Heart left ventricle (tissue), 16 donors: ENCODE measurements at regions of chr22 and their contacts with region 1.

Region 1: GRCh38 chr22:22959147-22959827 is 71.7 kb downstream of the IGLL5 start:
- DNase-seq: peak; percentile 64 to 73 (median 70)
- ATAC-seq: peak; percentile 35 to 74 (median 71)
- H3K4me3 ChIP-seq: no peak overlapping the region
- H3K27ac ChIP-seq: peak overlapping the region in 9 of 12 donors; percentile 43 to 79 (median 66)
- H3K4me1 ChIP-seq: peaks cover 0 to 14% (median 6%) of the 10 kb centered on the region in 12 donors
- H3K27me3 ChIP-seq: peaks cover 0 to 17% (median 0%) of the 10 kb centered on the region in 9 donors
- CTCF ChIP-seq: peak; percentile 80 to 99 (median 92)
- POLR2A ChIP-seq: no peak

Region 2: DNA sequence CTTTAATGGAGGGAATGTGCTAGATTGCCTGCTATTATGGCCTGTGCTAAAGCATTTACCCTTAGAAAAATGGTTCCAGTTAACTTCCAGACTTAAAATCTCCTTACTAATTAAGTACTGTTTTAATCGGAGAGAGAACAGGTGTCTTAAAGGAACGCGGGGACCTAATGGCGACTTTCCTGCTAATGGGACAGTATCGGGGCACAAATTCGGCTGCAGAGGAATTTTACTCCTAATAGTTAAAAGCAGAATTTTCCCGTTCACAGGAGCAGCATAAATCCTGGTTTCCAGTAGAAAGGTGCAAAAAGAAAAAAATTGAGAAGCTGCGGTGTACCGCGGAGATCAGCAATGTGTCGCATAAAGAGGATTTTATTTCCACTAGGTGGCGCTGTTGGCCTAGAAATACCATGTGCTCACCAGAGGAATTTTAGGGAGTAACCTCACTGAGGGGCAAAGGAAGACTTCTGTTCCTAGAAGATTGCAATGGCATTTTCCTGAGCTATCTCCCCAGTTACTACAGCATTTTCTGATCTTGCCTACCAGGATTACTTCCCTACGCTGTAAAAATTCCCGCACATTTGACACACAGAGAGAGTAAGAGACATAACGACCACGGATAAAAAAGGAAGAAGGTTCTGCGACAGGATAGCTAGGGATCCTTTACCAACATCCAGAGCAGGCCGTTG is 495.3 kb before region 1 on chr22:
- intact Hi-C with region 1: loop called (anchors 2 to 10 kb)
- DNase-seq: peak in 2 of 5 donors; percentile 42 to 53
- ATAC-seq: peak in 3 of 4 donors; percentile 49 to 73 (median 61)
- H3K4me3 ChIP-seq: no peak overlapping the region
- H3K27ac ChIP-seq: no peak overlapping the region
- H3K4me1 ChIP-seq: no peaks in the 10 kb centered on the region
- H3K27me3 ChIP-seq: peaks cover 0 to 49% (median 13%) of the 10 kb centered on the region in 9 donors
- CTCF ChIP-seq: peak; percentile 47 to 86 (median 74)
- POLR2A ChIP-seq: peak in 1 of 2 donors; percentile 25

Region 3: GRCh38 chr22:22767876-22768602 is 191.2 kb before region 1 on chr22:
- intact Hi-C with region 1: no loop called
- DNase-seq: no peak
- ATAC-seq: no peak
- H3K4me3 ChIP-seq: no peak overlapping the region
- H3K27ac ChIP-seq: no peak overlapping the region
- H3K4me1 ChIP-seq: no peaks in the 10 kb centered on the region
- H3K27me3 ChIP-seq: peaks cover 0 to 20% (median 0%) of the 10 kb centered on the region in 9 donors
- CTCF ChIP-seq: no peak
- POLR2A ChIP-seq: no peak

Region 4: DNA sequence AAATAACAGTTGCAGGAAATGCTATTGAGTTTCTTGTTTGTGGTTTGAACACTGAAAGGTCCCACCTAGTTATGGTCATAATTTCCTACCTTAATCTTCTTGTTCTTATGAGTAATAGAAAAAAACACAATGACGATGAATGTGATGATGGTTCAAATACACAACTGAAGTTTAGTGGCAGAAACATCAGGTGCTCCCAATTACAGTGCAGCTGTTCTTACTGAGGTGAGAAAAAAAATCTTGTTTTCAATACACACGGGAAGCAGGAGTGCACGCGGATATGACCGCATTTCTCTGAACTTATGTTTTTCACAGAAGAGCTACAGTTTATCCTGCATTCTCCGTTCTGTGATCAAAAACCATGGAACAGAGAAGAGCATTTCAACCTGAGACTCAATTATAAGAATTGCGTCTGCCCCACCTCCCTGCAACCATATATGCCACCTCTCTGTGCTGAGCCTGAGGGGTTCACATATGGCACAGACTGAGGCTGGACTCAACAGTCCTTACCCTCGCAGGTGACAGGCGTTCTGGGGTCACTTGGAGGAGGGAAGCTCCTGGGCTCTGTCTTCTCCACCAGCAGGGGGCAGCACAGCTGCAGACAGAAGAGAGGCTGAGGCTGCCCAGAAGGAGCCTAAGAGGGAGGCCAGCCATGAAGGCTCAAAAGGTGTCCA is 171.4 kb before region 1 on chr22:
- intact Hi-C with region 1: loop called in 1 of 10 experiments (anchors 10 kb)
- DNase-seq: peak in 4 of 5 donors; percentile 36 to 76 (median 40)
- ATAC-seq: peak in 3 of 4 donors; percentile 50 to 60 (median 54)
- H3K4me3 ChIP-seq: no peak overlapping the region
- H3K27ac ChIP-seq: peak overlapping the region in 1 of 12 donors; percentile 71
- H3K4me1 ChIP-seq: peaks cover 0 to 8% (median 0%) of the 10 kb centered on the region in 12 donors
- H3K27me3 ChIP-seq: peaks cover 0 to 35% (median 6%) of the 10 kb centered on the region in 9 donors
- CTCF ChIP-seq: peak; percentile 45 to 79 (median 64)
- POLR2A ChIP-seq: no peak

Region 5: GRCh38 chr22:22903355-22903777 is 55.9 kb before region 1 on chr22:
- intact Hi-C with region 1: no loop called
- DNase-seq: no peak
- ATAC-seq: peak in 1 of 4 donors; percentile 31
- H3K4me3 ChIP-seq: no peak overlapping the region
- H3K27ac ChIP-seq: no peak overlapping the region
- H3K4me1 ChIP-seq: peaks cover 0 to 4% (median 0%) of the 10 kb centered on the region in 12 donors
- H3K27me3 ChIP-seq: peaks cover 0 to 5% (median 0%) of the 10 kb centered on the region in 9 donors
- CTCF ChIP-seq: no peak
- POLR2A ChIP-seq: no peak

Region 6: DNA sequence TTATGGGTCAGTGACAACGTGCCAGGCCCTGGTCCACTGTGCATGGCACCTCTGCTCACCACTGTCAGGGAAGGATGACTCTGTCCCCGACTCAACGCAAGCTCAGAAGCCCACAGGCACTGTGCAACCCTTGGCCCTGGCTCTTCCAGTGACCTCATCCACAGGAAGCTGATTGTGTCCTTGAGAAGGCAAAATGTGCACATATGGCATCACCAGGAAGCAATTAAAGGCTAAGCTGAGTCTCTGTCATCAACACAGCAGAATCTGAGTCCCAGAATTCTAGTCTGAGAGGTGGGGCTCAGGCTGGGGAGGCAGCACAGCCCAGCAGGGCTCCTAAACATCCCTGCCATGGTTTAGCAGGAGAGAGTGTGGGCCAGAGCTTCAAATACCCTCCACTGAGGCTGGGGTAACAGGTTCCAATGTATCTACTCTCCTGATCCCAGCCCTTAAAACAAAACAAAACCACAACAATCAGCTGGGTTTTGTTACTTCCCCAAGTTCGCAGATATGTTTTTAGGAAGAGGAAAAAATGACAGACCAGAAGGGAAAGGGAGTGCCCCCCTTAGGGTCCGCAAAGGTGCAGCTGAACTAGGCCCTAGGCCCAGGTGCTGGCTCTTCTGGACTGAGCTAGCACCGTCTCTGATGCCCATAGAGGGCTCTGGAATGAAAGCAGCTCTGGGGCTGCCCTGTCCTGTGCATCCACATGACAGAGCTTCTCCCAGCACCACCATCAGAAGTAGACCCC is 77.6 kb after region 1 on chr22:
- intact Hi-C with region 1: loop called in 1 of 10 experiments (anchors 5 kb)
- DNase-seq: no peak
- ATAC-seq: peak in 3 of 4 donors; percentile 24 to 71 (median 67)
- H3K4me3 ChIP-seq: no peak overlapping the region
- H3K27ac ChIP-seq: no peak overlapping the region
- H3K4me1 ChIP-seq: peaks cover 0 to 7% (median 0%) of the 10 kb centered on the region in 12 donors
- H3K27me3 ChIP-seq: peaks cover 0 to 8% (median 0%) of the 10 kb centered on the region in 9 donors
- CTCF ChIP-seq: no peak
- POLR2A ChIP-seq: no peak

Region 7: DNA sequence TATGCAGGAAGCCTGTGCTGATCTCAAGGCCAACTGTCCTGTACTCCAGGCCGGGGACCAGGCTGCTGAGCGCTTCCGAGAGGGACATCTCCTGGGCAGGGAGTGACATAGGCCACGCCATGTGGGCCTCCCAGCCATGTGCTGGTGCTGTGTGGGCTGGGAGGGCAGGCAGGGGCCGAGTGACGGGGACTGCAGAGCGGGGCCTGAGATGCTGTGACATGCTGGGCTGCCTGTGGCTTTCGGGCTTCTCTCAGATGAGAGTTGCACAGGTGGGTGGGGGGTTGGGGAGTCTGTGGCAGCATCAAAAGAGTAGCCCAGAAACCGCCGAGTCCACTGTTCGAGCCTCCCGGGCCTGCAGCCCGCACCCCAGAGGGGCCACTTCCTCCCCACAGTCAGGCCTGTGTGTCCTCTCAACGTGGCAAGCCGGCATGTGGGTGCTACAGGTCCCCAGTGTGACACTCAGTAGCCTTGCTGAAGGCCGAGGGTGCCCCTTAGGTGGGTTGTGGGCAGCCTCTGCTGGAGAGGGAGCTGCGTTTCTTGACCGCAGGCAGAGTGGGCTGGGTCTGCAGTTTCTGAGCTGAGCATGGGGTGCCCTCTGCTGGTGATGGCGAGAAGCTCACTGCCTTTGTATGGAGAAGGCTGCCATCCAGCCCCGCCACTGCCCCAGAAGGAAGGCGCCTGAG is 322.3 kb after region 1 on chr22:
- intact Hi-C with region 1: loop called in 7 of 10 experiments (anchors 5 to 10 kb)
- DNase-seq: peak; percentile 83 to 89 (median 84)
- ATAC-seq: peak; percentile 69 to 83 (median 74)
- H3K4me3 ChIP-seq: no peak overlapping the region
- H3K27ac ChIP-seq: peak overlapping the region in 6 of 12 donors; percentile 33 to 82 (median 48)
- H3K4me1 ChIP-seq: peaks cover 0 to 33% (median 19%) of the 10 kb centered on the region in 12 donors
- H3K27me3 ChIP-seq: no peaks in the 10 kb centered on the region
- CTCF ChIP-seq: peak; percentile 85 to 98 (median 94)
- POLR2A ChIP-seq: peak in 1 of 2 donors; percentile 24

Region 8: DNA sequence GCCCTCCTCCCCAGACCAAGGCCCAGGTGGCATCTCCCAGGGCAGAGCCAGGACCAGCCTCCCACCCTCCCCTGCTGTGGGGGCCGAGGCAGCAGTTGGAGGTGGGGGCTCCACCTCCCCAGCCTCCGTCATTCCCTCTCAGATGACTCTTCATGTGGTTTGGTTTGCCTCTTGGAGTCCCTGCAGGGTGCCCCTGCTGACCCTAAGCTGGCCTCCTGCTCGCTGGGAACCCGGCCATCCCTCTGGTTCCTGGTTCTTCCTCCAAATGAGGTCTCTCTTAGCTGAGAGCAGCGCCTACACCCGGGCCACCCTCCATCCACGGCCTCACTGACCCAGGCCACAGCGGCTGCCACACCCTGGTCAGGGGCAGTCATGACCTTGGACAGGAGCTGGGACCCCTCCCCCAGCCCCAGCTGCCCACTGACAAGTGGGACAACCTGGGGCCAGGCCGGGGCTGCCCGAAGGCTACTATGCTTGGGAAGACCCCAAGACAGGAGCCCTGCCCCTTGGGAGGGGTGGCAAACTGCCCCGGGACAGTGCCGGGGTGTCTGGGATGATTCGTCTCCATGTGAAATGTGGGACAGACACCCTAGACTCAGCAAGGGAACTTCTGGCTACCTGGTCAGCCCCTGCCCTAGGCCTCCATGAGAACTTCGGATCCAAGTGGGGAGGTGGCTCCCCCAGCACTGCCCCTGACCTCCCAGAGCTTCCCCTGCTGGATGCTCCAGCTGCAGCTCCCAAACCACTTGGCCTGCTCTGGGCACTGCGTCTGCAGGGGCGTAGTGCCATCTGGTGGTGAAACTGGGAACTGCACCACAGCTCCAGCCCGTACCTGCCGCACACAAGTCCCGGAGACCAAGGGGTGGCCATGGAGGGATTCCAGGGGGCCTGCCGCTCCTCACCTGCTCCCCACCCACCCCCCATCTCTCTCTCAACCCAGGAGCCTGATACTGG is 426.3 kb after region 1 on chr22:
- intact Hi-C with region 1: loop called in 5 of 10 experiments (anchors 2 to 5 kb)
- DNase-seq: peak; percentile 68 to 89 (median 77)
- ATAC-seq: peak; percentile 49 to 89 (median 82)
- H3K4me3 ChIP-seq: no peak overlapping the region
- H3K27ac ChIP-seq: no peak overlapping the region
- H3K4me1 ChIP-seq: peaks cover 0 to 9% (median 0%) of the 10 kb centered on the region in 12 donors
- H3K27me3 ChIP-seq: peaks cover 0 to 8% (median 0%) of the 10 kb centered on the region in 9 donors
- CTCF ChIP-seq: peak; percentile 92 to 100 (median 98)
- POLR2A ChIP-seq: no peak